H1 (cell line): ENCODE measurements at regions of chr18 and their contacts with region 1.

Region 1: DNA sequence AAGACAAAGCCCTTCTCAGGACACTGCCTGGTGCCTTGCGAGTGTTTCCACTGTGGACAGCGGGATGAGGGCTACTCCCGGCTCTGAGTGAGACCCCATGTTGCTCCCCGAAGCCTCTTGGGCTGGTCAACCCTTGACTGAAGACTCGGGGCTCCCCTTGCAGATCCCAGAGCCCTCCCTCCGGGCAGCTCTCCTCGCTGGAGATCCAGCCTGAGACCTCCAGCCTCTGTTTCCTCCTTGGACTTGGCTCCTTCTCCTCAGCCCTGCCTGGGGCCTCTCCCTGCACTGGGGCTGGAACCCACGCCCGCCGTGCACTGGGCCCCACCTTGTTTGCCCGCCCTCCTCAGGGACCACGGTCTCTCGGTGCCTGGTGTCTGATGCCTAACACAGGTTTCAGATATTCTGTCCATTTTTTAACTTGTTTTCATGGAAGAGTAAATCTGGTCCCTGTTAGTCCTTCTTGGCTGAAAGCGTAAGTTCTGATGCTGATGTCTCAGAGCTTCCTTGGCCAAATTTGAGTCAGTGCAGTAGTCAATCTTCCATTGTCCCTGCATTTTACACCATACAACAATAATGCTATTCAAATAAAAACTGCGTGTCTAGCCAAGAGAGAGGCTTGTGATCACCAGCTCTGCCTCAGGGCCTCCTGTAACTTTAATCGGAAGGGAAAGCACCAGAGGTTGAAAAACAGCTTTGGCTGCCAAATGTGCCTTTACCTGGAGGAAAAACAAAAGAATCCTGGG is 139.3 kb upstream of the CTDP1 start:
- DNase-seq: no peak
- H3K4me3 ChIP-seq: no peak overlapping the region
- H3K27ac ChIP-seq: no peak overlapping the region
- H3K4me1 ChIP-seq: no peaks in the 10 kb centered on the region
- H3K27me3 ChIP-seq: 0 out of 7 replicates have a peak, but pooled peaks cover 0 to 2% (median 0%) of the 10 kb centered on the region in 4 experiments
- CTCF ChIP-seq: no peak
- EP300 ChIP-seq: no peak
- POLR2A ChIP-seq: no peak
- RAD21 ChIP-seq: no peak

Region 2: DNA sequence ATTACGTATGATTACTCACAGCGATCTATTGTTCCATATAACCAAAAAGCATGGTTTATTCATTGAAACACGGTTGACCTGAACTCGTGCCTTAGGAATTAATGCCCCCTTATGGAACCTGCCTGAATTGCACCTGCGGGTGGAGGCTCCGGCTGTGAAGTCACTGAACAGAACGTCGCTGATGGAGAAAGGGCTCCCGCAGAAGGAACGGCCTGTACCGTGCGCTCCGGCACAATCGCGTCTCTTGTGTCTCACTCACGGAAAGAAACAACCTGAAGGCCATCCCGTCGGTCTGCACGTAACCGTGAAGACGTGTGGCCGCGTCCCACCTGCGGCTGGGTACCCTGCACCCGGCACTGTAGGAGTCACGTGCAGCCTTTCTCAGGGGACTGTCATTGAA is 11.5 kb before region 1 on chr18:
- CTCF ChIA-PET with region 1: interaction called, 22 read pairs
- POLR2A ChIA-PET with region 1: no interaction called
- DNase-seq: peak; percentile 34 to 92
- H3K4me3 ChIP-seq: no peak overlapping the region
- H3K27ac ChIP-seq: no peak overlapping the region
- H3K4me1 ChIP-seq: peaks cover 0 to 12% (median 5%) of the 10 kb centered on the region in 4 experiments; a peak in 5 of 7 replicates
- H3K27me3 ChIP-seq: peaks cover 0 to 2% (median 0%) of the 10 kb centered on the region in 4 experiments; a peak in 3 of 7 replicates
- CTCF ChIP-seq: peak in 2 of 3 experiments; percentile 83 to 93; a peak in 3 of 4 replicates
- EP300 ChIP-seq: no peak
- POLR2A ChIP-seq: no peak
- RAD21 ChIP-seq: peak; percentile 93

Region 3: DNA sequence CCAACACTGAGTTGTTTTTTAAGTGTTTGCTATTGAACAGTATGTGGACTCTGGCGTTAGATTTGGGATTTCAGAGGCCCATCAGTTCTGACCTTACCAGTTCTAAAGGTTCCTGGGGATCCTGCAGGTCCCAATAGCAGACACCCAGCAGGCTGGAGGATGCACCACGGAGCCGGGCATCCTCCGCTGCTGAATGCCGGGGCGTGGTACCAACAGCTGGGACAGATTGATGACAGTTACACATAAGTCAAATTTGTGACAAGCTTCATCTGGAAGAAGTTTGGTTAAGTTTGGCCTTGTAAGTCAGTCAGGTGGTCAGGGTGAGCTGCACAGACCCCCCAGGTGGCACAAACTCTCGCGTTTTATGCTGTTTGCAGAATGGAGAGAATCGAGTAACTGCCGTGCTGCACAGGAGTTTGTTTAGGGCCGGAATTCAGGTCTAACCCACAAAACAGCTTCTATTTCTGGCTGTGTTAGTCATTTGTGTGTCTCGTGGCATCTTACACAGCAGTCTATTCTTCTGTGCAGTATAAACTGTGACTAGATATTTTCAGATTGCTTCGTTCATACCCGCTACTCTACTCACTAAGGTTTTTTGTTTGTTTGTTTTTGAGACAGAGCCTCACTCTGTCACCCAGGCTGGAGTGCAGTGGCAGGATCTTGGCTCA is 158.5 kb after region 1 on chr18:
- CTCF ChIA-PET with region 1: no interaction called
- POLR2A ChIA-PET with region 1: no interaction called
- DNase-seq: no peak
- H3K4me3 ChIP-seq: no peak overlapping the region
- H3K27ac ChIP-seq: no peak overlapping the region
- H3K4me1 ChIP-seq: no peaks in the 10 kb centered on the region
- H3K27me3 ChIP-seq: no peaks in the 10 kb centered on the region
- CTCF ChIP-seq: no peak
- EP300 ChIP-seq: no peak
- POLR2A ChIP-seq: no peak
- RAD21 ChIP-seq: no peak